Left cardiac atrium (tissue), 4 donors: ENCODE measurements at regions of chr5 and their contacts with region 1.

Region 1: GRCh38 chr5:80083101-80083890 is 48.1 kb downstream of the THBS4 start:
- DNase-seq: peak; percentile 32
- ATAC-seq: peak; percentile 86 to 90

Region 2: GRCh38 chr5:79759436-79759835 is 323.9 kb before region 1 on chr5:
- intact Hi-C with region 1: no loop called
- DNase-seq: no peak
- ATAC-seq: peak in 1 of 2 donors; percentile 77

Region 3: GRCh38 chr5:79811081-79811480 is 272.2 kb before region 1 on chr5:
- intact Hi-C with region 1: no loop called
- DNase-seq: no peak
- ATAC-seq: no peak

Region 4: GRCh38 chr5:79864364-79864763 is 218.9 kb before region 1 on chr5:
- intact Hi-C with region 1: loop called in 1 of 2 experiments (anchors 5 kb)
- DNase-seq: no peak
- ATAC-seq: no peak

Region 5: GRCh38 chr5:80125962-80126480 is 42.7 kb after region 1 on chr5:
- intact Hi-C with region 1: no loop called
- DNase-seq: no peak
- ATAC-seq: peak; percentile 49 to 61

Region 6: DNA sequence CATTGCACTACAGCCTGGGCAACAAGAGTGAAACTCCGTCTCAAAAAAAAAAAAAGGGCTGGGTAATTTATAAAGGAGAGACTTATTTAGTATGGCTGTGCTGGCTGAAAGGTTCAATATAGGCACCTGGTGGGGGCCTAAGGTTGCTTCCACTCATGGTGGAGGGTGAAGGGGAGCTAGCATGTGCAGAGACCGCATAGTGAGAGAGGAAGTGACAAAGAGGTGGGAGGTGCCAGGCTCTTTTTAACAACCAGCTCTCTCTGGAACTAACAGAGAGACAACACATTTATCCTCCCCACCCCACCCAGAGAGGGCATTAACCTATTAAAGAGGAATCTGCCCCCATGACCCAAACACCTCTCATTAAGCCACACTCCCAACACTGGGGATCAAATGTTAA is 201.4 kb after region 1 on chr5:
- intact Hi-C with region 1: no loop called
- DNase-seq: no peak
- ATAC-seq: no peak

Region 7: DNA sequence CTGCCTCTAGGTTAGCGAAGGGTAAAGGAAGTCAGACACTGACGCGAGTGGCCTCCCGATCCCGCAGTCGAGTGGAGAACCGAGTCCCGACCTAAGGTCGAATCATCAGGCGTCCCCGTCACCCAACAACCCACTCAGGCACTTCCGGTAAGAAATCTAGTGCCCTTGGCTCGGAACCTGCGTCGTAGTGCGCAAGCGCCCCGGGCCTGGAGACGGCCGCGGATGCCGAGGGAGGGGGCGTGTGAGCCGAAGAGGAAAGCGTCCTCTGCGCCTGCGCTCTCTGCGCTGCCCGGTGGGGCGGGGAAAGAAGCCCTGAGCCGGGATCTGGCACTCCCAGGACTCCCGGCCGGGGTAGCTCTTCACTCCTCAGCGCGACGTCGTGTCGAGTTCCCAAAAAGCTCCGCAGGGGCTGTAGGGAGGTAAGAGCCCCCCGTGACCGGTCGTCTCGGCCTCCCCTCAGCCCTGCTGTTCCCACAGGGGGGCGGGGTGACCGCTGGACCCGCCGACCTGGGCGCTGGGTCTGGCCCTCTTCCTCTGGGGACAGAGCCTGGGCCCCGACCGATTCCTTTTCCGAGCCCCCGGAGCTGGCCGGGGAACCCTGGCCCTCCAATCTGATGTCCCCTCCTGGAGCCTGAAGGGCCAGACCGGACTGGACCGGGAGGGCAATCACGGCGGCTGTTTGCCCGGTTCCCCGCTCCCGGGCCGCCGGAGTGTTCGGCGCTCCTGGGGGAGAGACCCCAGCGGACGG is 324.6 kb after region 1 on chr5 and contains the start of gene ZFYVE16:
- intact Hi-C with region 1: loop called in 1 of 2 experiments (anchors 10 kb)
- DNase-seq: peak; percentile 99
- ATAC-seq: peak; percentile 96 to 98
- total RNA-seq, gene ZFYVE16: 37.7 to 45.5 TPM